ENCODE measurements at regions of chr9 and their contacts with region 1.

Region 1: GRCh38 chr9:27476870-27477515 is 47.1 kb upstream of the IFNK start:
- DNase-seq: no peak
- CTCF ChIP-seq: no peak

Region 2: GRCh38 chr9:27489087-27489876 is 12.3 kb after region 1 on chr9:
- CTCF ChIA-PET with region 1: interaction called, 12 read pairs
- POLR2A ChIA-PET with region 1: interaction called, 4 read pairs
- DNase-seq: peak; percentile 63
- CTCF ChIP-seq: no peak